ENCODE measurements at regions of chrX and their contacts with region 1.

Region 1: DNA sequence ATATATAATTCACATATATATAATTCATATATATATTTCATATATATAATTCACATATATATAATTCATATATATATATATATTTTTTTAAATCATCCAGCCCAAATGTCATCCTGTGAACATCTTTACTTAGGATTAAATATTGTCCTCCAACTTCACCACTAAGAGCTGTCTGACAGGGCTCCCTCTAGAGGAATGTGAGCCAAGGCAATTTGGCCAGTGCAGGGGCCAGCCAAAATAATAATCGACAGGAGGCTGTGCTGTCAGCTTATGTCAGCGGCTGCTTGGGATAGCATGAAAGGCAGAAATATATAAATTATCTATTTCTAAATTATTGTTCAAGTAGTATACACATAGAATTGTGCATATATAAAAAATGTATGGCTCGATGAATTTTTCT is 29.5 kb downstream of the EGFL6 start:
- DNase-seq: no peak
- H3K4me3 ChIP-seq: no peak overlapping the region
- H3K27ac ChIP-seq: no peak overlapping the region
- H3K4me1 ChIP-seq: peaks cover 0 to 3% of the 10 kb centered on the region in 2 donors
- H3K27me3 ChIP-seq: no peaks in the 10 kb centered on the region
- CTCF ChIP-seq: peak in 1 of 3 experiments; percentile 16

Region 2: GRCh38 chrX:13411496-13412207 is 187.2 kb before region 1 on chrX:
- intact Hi-C with region 1: no loop called
- DNase-seq: no peak
- H3K4me3 ChIP-seq: no peak overlapping the region
- H3K27ac ChIP-seq: no peak overlapping the region
- H3K4me1 ChIP-seq: no peaks in the 10 kb centered on the region
- H3K27me3 ChIP-seq: no peaks in the 10 kb centered on the region
- CTCF ChIP-seq: no peak

Region 3: DNA sequence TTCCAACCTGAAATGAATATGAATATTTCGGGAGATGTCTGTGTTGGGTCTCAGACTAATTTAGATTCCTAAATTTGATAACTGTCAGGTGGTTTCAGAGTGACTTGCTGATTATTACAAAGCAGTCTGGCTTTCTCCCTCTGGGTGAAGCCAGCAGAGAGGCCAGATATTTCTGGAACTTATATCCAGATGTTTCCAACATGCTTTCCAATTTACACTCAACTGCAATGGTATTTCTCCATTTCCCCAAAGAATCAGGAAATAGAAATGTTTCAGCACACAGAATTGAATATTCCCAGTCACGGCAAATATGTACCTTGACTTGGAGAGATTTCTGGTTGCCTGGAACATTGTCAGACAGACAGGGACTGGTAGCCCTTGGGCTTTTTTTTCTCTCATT is 77.9 kb before region 1 on chrX:
- intact Hi-C with region 1: loop called (anchors 5 kb)
- DNase-seq: no peak
- H3K4me3 ChIP-seq: no peak overlapping the region
- H3K27ac ChIP-seq: peak overlapping the region; percentile 60 to 69
- H3K4me1 ChIP-seq: peaks cover 0 to 3% of the 10 kb centered on the region in 2 donors
- H3K27me3 ChIP-seq: no peaks in the 10 kb centered on the region
- CTCF ChIP-seq: no peak

Region 4: GRCh38 chrX:13923845-13924244 is 325.0 kb after region 1 on chrX:
- intact Hi-C with region 1: no loop called
- DNase-seq: no peak
- H3K4me3 ChIP-seq: no peak overlapping the region
- H3K27ac ChIP-seq: no peak overlapping the region
- H3K4me1 ChIP-seq: no peaks in the 10 kb centered on the region
- H3K27me3 ChIP-seq: no peaks in the 10 kb centered on the region
- CTCF ChIP-seq: no peak